ENCODE measurements at regions of chr18 and their contacts with region 1.

Region 1: GRCh38 chr18:12838178-12838634 is 45.8 kb downstream of the PTPN2 start:
- DNase-seq: peak in 4 of 6 donors; percentile 60 to 79 (median 70)
- ATAC-seq: peak; percentile 89 to 94 (median 92)
- H3K4me3 ChIP-seq: peak overlapping the region in 1 of 4 donors; percentile 14
- H3K27ac ChIP-seq: peak overlapping the region; percentile 55 to 91 (median 87)
- H3K4me1 ChIP-seq: peaks cover 8 to 30% (median 22%) of the 10 kb centered on the region in 3 donors
- H3K27me3 ChIP-seq: no peaks in the 10 kb centered on the region
- CTCF ChIP-seq: no peak

Region 2: DNA sequence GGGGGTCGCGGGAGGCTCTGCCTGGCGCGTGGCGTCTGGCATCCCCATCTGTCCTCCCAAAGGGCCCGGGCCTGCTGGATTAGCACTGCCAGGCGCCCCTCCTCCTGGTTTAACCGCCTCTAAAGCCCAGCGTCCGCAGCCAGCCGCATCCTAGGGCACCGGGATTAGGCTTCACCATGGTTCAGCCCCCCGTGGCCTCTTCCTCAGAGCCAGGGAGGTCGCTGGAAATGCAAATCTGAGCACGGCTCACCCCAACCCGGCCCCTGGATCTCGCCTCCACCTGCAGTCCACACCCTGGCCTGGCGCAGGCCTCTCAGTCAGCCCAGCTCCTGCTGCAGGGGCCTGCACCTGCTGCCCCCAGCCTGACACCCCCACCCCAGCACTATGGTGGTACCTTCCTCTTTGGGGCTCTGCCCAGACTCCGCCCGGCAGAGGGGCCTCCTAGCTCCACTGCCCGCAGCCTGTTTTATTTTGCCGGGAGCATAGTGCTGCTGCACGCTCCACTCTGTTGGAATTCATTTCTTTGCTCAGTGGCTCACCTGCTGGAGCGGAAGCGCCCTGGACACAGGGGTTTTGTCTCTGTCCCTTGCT is 417.3 kb before region 1 on chr18:
- intact Hi-C with region 1: no loop called
- DNase-seq: peak in 1 of 6 donors; percentile 66
- ATAC-seq: peak in 2 of 4 donors; percentile 24 to 47
- H3K4me3 ChIP-seq: peak overlapping the region in 1 of 4 donors; percentile 54
- H3K27ac ChIP-seq: no peak overlapping the region
- H3K4me1 ChIP-seq: no peaks in the 10 kb centered on the region
- H3K27me3 ChIP-seq: no peaks in the 10 kb centered on the region
- CTCF ChIP-seq: no peak

Region 3: DNA sequence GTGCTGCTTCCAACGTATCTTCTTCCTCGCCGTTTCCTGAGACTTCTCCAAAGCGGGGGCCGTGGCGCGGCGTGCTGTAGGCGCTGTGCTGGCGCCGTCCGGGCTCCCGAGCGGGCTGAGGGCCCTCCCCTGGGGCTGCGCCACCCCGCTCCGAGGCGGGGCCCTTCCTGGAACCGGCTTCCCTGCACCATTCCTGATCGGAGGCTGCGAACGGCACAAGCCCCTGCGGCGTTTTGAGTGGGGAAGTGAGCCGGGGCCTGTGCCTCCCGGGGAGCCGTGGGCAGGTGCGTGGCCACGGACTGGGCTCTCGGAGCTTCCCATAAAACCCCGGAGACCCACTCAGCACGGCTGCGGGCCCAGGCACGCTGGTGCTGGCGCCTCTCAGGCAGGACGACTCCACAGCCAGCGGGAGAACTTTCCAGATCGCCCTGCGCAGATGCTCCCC is 60.7 kb before region 1 on chr18:
- intact Hi-C with region 1: loop called in 1 of 3 experiments (anchors 10 kb)
- DNase-seq: peak in 1 of 6 donors; percentile 12
- ATAC-seq: peak in 3 of 4 donors; percentile 74 to 85 (median 78)
- H3K4me3 ChIP-seq: peak overlapping the region in 1 of 4 donors; percentile 20
- H3K27ac ChIP-seq: no peak overlapping the region
- H3K4me1 ChIP-seq: no peaks in the 10 kb centered on the region
- H3K27me3 ChIP-seq: no peaks in the 10 kb centered on the region
- CTCF ChIP-seq: no peak

Region 4: DNA sequence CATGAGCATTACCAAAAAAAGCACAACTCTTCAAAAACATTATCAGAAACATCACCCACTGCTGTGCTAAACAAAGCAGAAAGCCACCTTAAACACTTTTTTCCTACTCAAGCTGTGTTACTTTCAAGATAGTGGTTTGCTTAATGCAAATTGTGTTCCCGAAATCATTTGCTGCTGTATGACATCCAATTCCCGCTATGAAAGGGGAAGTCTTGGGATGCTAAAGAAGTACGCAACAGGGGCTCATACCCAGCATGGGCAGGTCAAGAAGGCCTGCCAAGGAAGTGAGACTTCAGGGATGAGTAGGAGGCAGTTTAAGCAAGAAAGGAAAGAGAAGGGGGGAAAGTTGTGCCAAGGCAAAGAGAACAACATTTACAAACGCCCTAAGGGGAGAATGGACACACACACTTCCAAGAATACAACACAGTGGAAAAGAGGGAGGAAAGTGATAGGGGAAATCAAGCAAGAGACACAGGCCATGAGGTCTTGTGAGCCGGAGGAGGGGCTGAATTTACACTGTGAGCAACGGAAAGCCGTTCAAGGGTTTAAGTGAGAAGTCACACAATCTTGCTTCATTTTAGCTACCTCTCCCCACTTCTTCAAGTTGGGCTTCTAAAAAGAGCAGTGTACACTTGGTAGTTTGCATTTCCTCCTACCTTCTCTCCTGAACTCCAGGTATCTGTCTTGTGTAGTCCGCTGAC is 41.8 kb after region 1 on chr18:
- intact Hi-C with region 1: loop called in 1 of 3 experiments (anchors 5 kb)
- DNase-seq: no peak
- ATAC-seq: no peak
- H3K4me3 ChIP-seq: no peak overlapping the region
- H3K27ac ChIP-seq: peak overlapping the region in 3 of 4 donors; percentile 1 to 17 (median 3)
- H3K4me1 ChIP-seq: peaks cover 5 to 15% (median 9%) of the 10 kb centered on the region in 3 donors
- H3K27me3 ChIP-seq: no peaks in the 10 kb centered on the region
- CTCF ChIP-seq: no peak

Region 5: DNA sequence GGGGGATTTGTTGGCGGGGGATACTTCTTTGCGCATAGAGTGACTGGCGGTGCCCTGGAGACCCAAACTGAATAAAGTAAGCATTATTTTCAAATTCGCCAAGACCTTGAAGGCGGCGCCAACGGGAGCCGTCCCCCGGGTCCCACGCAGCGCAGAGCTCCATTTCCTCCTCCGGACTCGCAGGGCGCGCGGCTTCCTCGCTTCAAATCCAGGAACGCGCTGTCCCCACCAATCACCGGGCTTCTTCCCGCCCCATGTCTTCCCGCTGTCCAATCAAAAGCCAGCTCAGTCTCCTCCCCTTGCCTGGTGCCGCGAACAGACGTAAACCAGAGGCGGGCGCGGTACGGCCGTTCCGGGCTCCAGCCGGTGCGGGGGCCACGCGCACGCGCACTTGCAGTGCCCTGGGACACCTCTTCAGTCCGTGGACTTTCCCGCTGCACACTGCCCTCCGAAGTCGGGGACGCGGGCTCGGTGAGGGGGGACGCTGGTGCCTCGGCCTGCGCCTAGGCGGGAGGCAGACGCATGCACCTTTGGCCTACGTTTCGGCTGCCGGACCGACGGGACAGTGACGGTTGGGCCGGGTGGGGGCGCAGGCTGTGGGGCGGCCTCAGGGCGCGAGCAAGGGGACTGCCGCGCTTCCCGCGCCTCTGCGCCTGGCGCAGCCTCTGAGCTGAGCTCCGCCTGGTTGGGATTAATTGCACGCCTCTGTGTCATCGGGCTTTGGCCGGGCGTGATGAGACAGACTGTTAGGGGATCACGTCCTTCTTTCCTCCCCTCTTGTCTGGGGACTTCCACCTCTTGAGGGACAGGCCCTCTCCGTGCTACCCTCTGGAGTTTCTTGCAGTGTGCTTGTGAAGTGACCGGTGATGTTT is 153.0 kb after region 1 on chr18 and contains the start of gene CEP192:
- intact Hi-C with region 1: no loop called
- DNase-seq: peak; percentile 96 to 99 (median 97)
- ATAC-seq: peak; percentile 96 to 100 (median 98)
- H3K4me3 ChIP-seq: peak within 1 kb of the TSS; percentile 69 to 98 (median 86)
- H3K27ac ChIP-seq: peak within 1 kb of the TSS; percentile 61 to 93 (median 85)
- H3K4me1 ChIP-seq: peaks cover 0 to 9% (median 9%) of the 10 kb centered on the region in 3 donors
- H3K27me3 ChIP-seq: no peaks in the 10 kb centered on the region
- CTCF ChIP-seq: no peak
- total RNA-seq, gene CEP192: 10.3 to 20.7 (median 14.0) TPM

Measured in pancreas (tissue), 10 donors.